MCF 10A (cell line): ENCODE measurements at regions of chr15 and their contacts with region 1.

Region 1: DNA sequence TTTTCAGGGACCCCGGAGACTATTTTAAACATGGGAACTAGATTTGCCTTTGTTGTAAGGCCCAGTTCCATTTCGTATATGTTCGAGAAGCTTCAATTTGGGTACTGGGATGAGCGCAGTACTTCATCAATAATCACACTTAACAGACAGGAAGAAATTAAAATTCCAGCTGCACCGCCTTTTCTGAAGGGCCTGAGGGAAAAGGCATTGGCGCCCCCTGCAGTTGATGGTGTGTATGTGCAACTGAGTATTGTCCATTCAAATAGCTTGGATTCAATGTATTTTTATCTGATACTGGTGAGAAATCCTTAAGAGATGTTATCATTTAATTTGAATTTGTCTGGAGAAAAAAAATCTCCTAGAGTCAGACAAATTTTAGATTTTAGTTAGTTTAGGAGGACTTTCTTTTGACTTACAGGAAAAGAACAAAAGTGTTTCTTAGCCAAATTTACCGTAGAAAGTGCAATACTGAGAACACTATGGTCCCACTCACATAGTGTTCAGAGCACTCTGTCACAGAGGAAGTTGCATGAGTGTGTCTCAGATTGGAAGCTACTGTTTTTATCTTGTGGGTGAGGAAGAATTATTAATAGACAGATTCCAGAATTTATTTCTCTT is 5.4 kb upstream of the ALDH1A2 start:
- DNase-seq: peak; percentile 79
- H3K4me3 Mint-ChIP-seq: no peak overlapping the region
- H3K27ac Mint-ChIP-seq: no peak overlapping the region
- H3K4me1 Mint-ChIP-seq: peaks cover 5% of the 10 kb centered on the region
- H3K27me3 Mint-ChIP-seq: no peaks in the 10 kb centered on the region
- CTCF ChIP-seq: peak; percentile 93

Region 2: GRCh38 chr15:57667171-57667849 is 403.6 kb before region 1 on chr15:
- CTCF ChIA-PET with region 1: interaction called, 16 read pairs
- POLR2A ChIA-PET with region 1: interaction called, 3 read pairs
- intact Hi-C with region 1: loop called (anchors 1 kb)
- DNase-seq: peak; percentile 73
- H3K4me3 Mint-ChIP-seq: peak overlapping the region; percentile 43
- H3K27ac Mint-ChIP-seq: no peak overlapping the region
- H3K4me1 Mint-ChIP-seq: peaks cover 19% of the 10 kb centered on the region
- H3K27me3 Mint-ChIP-seq: no peaks in the 10 kb centered on the region
- CTCF ChIP-seq: peak; percentile 50

Region 3: DNA sequence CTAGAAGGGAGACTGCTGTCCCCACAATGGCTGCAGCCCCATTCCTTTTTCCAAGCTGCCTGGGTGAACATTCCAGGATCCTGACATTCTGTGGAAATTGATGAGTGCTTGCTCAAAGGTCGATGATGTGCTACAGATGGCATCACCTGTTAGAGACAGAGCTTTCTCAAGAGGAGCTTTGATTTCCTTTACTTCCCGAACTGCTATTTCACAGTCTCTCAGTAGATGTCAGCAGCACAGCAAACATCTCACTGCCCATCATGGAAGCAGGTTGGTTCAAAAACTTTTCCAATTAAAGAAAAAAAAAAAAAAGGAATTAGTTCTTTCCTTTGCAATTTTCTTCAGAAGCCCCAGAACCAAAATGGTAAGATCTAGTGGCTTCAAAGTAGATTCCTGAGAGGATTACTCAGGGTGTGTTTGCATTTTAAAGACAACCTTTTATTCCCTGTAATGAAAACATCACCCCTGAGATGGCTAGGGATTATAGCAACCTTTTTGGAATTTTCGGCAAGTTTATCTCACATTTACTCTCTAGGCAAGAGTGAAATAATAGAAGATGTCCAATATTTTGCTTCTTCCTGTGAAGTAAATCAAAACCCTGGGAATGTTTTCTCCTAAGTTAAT is 319.6 kb before region 1 on chr15:
- CTCF ChIA-PET with region 1: interaction called, 224 read pairs
- POLR2A ChIA-PET with region 1: interaction called, 14 read pairs
- intact Hi-C with region 1: loop called (anchors 1 kb)
- DNase-seq: peak; percentile 51
- H3K4me3 Mint-ChIP-seq: no peak overlapping the region
- H3K27ac Mint-ChIP-seq: no peak overlapping the region
- H3K4me1 Mint-ChIP-seq: no peaks in the 10 kb centered on the region
- H3K27me3 Mint-ChIP-seq: no peaks in the 10 kb centered on the region
- CTCF ChIP-seq: peak; percentile 59

Region 4: DNA sequence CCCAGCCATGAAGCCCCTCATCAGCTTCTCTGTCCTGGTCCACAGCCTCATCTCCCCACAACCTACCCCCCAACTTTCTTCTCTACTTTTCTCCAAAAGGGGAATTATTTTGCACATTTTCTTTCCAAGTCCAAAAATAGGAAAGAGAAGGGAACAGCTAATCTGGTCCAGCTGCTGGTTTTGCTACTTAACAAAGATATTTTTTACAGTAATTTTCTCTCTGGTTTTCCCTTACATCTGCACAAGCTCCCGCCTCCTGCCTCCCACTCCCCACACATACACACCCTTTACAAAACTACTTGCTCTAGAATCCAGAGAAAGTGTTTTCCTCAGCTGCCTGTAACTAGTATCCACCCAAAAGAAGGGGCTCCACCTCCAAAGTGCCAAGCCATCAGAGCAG is 187.2 kb before region 1 on chr15:
- CTCF ChIA-PET with region 1: interaction called, 10 read pairs
- POLR2A ChIA-PET with region 1: no interaction called
- intact Hi-C with region 1: no loop called
- DNase-seq: no peak
- H3K4me3 Mint-ChIP-seq: no peak overlapping the region
- H3K27ac Mint-ChIP-seq: no peak overlapping the region
- H3K4me1 Mint-ChIP-seq: no peaks in the 10 kb centered on the region
- H3K27me3 Mint-ChIP-seq: no peaks in the 10 kb centered on the region
- CTCF ChIP-seq: no peak

Region 5: GRCh38 chr15:58049520-58050227 is 21.2 kb before region 1 on chr15:
- CTCF ChIA-PET with region 1: interaction called, 72 read pairs
- POLR2A ChIA-PET with region 1: no interaction called
- intact Hi-C with region 1: no loop called
- DNase-seq: no peak
- H3K4me3 Mint-ChIP-seq: no peak overlapping the region
- H3K27ac Mint-ChIP-seq: no peak overlapping the region
- H3K4me1 Mint-ChIP-seq: no peaks in the 10 kb centered on the region
- H3K27me3 Mint-ChIP-seq: no peaks in the 10 kb centered on the region
- CTCF ChIP-seq: no peak